Psoas muscle (tissue), 8 donors: ENCODE measurements at regions of chr18 and their contacts with region 1.

Region 1: DNA sequence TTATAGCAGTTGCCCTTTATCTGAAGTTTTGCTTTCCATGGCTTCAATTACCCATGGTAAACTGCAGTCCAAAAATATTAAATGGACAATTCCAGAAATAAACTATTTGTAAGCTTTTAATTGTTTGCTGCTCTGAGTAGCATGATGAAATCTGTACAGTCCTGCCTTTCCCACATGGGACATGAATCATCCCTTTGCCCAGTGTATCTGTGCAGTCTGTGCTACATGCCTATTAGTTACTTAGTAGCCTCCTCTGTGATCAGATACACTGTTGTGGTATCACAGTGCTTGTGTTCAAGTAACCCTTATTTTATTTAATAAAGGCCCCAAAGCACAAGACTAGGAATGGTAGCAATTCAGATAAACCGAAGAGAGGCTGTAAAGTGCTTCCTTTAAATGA is 810.6 kb upstream of the PIK3C3 start:
- DNase-seq: no peak
- ATAC-seq: no peak
- H3K4me3 ChIP-seq: no peak overlapping the region
- H3K27ac ChIP-seq: no peak overlapping the region
- H3K4me1 ChIP-seq: no peaks in the 10 kb centered on the region
- H3K27me3 ChIP-seq: no peaks in the 10 kb centered on the region
- CTCF ChIP-seq: no peak

Region 2: GRCh38 chr18:40877096-40877495 is 267.3 kb before region 1 on chr18:
- intact Hi-C with region 1: no loop called
- DNase-seq: no peak
- ATAC-seq: no peak
- H3K4me3 ChIP-seq: no peak overlapping the region
- H3K27ac ChIP-seq: no peak overlapping the region
- H3K4me1 ChIP-seq: no peaks in the 10 kb centered on the region
- H3K27me3 ChIP-seq: no peaks in the 10 kb centered on the region
- CTCF ChIP-seq: no peak

Region 3: GRCh38 chr18:41075212-41075611 is 69.2 kb before region 1 on chr18:
- intact Hi-C with region 1: loop called in 1 of 2 experiments (anchors 10 kb)
- DNase-seq: no peak
- ATAC-seq: no peak
- H3K4me3 ChIP-seq: no peak overlapping the region
- H3K27ac ChIP-seq: no peak overlapping the region
- H3K4me1 ChIP-seq: no peaks in the 10 kb centered on the region
- H3K27me3 ChIP-seq: no peaks in the 10 kb centered on the region
- CTCF ChIP-seq: no peak

Region 4: DNA sequence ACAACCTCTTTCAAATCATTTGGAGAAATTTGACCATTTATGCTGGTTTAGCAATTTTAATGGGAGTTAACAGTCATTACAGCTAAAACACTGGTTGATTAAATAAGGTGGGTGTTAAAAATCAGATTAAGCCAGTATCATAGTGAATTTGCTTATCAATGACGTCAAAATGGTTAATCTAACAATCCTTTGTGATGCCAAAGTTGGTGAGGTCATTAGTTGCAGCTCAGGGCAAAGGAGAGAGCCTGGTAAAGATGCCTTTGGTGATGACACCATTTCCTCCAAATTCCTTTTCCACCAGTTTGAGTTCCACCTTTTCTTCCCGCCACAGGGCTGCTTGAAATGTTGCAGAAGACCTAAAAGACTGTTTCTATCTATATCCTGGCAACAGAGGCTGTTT is 53.5 kb after region 1 on chr18:
- intact Hi-C with region 1: no loop called
- DNase-seq: no peak
- ATAC-seq: no peak
- H3K4me3 ChIP-seq: no peak overlapping the region
- H3K27ac ChIP-seq: no peak overlapping the region
- H3K4me1 ChIP-seq: no peaks in the 10 kb centered on the region
- H3K27me3 ChIP-seq: no peaks in the 10 kb centered on the region
- CTCF ChIP-seq: no peak

Region 5: GRCh38 chr18:41347057-41347456 is 202.6 kb after region 1 on chr18:
- intact Hi-C with region 1: no loop called
- DNase-seq: no peak
- ATAC-seq: no peak
- H3K4me3 ChIP-seq: no peak overlapping the region
- H3K27ac ChIP-seq: no peak overlapping the region
- H3K4me1 ChIP-seq: no peaks in the 10 kb centered on the region
- H3K27me3 ChIP-seq: no peaks in the 10 kb centered on the region
- CTCF ChIP-seq: no peak